ENCODE measurements at regions of chr6 and their contacts with region 1.

Region 1: GRCh38 chr6:25263657-25264056 is 15.5 kb upstream of the CARMIL1 start:
- DNase-seq: no peak

Region 2: DNA sequence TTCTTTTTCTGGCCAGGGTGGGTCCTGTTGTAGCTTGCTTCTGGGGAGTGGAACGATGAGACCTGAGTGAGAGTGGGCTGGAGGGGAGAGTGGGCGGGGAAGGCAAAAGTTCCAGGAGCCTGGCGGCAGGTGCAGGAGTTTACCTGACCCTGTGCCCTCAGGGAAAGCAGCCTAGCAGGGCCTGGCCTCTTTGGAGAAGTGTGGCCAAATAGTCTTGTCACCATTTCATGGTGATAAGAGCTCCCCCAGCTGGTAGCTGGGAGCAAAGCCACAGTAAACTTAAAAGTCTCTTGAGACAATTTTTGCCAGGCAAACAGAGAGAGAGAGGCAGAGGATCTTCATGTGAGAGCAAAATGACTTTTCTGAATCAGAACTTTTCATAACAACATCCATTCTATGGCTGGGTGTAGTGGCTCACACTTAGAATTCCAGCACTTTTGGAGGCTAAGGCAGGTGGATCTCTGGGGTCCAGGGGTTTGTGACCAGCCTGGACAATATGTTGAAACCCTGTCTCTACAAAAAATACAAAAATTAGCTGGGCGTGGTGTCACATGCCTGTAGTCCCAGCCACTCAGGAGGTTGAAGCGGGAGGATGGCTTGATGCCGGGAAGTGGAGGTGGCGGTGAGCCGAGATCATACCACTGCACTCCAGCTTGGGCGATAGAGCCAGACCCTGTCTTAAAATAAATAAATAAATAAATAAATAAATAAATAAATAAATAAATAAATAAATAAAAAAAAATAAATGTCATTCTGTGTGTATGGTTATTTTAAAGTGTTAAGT is 226.6 kb after region 1 on chr6:
- intact Hi-C with region 1: loop called in 1 of 2 experiments (anchors 5 kb)
- DNase-seq: peak; percentile 86

Region 3: GRCh38 chr6:25556516-25556915 is 292.9 kb after region 1 on chr6:
- intact Hi-C with region 1: loop called in 1 of 2 experiments (anchors 10 kb)
- DNase-seq: peak; percentile 91